IMR-90 (cell line): ENCODE measurements at regions of chr4 and their contacts with region 1.

Region 1: DNA sequence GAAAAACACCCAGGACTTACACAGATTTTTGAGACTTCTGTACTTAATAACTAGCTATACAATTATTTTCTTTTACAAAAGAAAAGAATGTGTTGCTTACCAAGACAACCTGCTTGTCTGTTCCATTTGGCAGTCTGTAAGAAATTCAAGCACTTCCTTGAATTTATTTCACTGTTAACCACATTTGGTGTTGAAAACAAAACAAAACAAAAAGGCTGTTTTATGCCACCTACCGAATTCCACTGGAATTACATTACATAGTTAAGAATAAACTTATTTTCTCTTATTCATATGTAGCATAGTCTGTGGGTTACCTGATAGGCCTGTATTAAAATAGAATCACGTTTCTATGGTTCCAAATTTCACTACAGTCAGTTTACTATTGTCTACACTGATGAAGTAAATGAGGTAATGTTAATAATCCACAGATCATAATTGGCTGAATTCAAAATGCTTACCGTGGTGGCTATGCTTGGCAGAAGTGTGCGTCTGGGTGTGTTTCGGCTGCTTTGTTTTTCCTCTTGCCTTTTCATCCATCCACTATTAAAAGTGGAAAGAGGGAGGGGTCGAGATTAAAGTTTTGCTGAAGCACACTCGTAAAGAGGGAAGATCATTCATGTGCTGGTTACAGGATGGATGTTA is at the start of gene TLR1:
- DNase-seq: peak; percentile 64
- ATAC-seq: peak; percentile 87
- H3K4me3 ChIP-seq: no peak within 1 kb of the TSS
- H3K27ac ChIP-seq: no peak within 1 kb of the TSS
- H3K4me1 ChIP-seq: no peaks in the 10 kb centered on the region
- H3K27me3 ChIP-seq: no peaks in the 10 kb centered on the region; the same call in 1 of the 2 replicates
- CTCF ChIP-seq: peak; percentile 58
- POLR2A ChIP-seq: no peak
- RAD21 ChIP-seq: peak; percentile 39
- total RNA-seq, gene TLR1: 1.1 TPM in 2 replicates

Region 2: DNA sequence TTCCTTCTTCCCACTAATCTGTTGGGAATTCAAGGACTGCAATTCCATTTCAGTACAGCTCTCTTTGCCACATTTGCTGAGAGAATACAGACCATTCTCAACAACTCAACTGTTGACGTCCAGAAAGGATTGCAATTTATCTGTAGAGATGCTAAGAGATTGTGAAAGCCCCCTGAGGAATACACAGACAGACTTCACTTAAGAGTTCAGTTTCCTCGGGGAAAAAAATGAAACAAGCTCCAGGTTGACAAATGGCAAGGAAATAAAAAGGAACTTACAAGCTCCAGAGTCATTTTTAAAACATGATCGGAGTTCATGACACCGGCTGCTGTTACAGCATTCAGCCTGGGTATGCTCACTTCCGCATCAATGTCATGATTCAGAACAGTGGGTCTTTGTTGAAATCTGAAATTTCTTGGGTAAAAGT is 35.8 kb before region 1 on chr4:
- CTCF ChIA-PET with region 1: no interaction called
- POLR2A ChIA-PET with region 1: no interaction called
- dilution Hi-C with region 1: no loop called
- in situ Hi-C with region 1: no loop called
- intact Hi-C with region 1: loop called (anchors 5 kb)
- DNase-seq: peak; percentile 13
- ATAC-seq: peak; percentile 37
- H3K4me3 ChIP-seq: no peak overlapping the region
- H3K27ac ChIP-seq: no peak overlapping the region
- H3K4me1 ChIP-seq: no peaks in the 10 kb centered on the region
- H3K27me3 ChIP-seq: peaks cover 9% of the 10 kb centered on the region
- CTCF ChIP-seq: no peak
- POLR2A ChIP-seq: no peak
- RAD21 ChIP-seq: no peak